Activated T-helper 1 cell treated with anti-CD3 and anti-CD28 coated beads, Interleukin-12 subunit alpha, Interleukin-12 subunit beta, Interleukin-2, Interleukin-4 antibody, amounts not matched to agents 30 ng/mL and 10 ng/mL and 1 ng/mL, durations not matched to agents 14 hours and 24 hours and 36 hours (primary cell): ENCODE measurements at regions of chr6 and their contacts with region 1.

Region 1: DNA sequence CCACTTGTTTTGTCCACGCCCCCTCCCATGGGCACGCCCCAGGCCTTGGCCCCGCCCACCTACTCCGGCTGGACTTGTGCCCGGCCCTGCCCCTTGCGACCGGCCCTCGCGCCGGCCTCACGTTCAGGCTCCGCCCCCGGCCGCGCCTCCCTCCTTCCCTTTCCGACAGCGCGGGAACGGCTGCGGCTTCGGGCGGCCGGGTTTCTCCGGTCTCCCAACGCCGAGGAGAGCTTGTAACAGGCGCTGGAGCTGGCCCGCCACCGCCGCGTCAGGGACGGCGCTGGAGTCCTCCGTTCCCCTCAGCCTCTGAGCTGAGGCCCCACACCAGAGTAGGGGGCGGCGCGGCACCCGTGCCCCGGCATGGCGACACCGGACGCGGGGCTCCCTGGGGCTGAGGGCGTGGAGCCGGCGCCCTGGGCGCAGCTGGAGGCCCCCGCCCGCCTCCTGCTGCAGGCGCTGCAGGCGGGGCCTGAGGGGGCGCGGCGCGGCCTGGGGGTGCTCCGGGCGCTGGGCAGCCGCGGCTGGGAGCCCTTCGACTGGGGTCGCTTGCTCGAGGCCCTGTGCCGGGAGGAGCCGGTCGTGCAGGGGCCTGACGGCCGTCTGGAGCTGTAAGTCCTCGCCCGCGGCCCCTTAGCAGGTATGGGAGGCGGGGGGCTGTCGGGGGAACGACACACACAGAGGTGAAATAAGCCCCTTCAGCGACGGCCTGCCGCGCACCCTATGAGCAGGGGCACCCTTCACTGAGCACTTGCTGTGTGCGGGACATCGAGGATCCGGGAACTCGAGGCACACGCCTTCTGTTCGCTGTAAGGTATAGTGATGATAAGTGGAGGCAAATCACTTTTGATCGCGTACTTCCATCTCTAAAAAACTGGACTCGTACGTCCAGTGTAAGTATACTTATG is at the start of gene FANCE:
- DNase-seq: peak; percentile 91
- H3K4me3 Mint-ChIP-seq: peak within 1 kb of the TSS; percentile 88
- H3K27ac Mint-ChIP-seq: peak within 1 kb of the TSS; percentile 61
- H3K4me1 Mint-ChIP-seq: peaks cover 48% of the 10 kb centered on the region
- H3K27me3 Mint-ChIP-seq: no peaks in the 10 kb centered on the region
- total RNA-seq, gene FANCE: 21.9 and 22.3 TPM in 2 replicates

Region 2: GRCh38 chr6:34964564-34964963 is 487.9 kb before region 1 on chr6:
- intact Hi-C with region 1: no loop called
- DNase-seq: no peak
- H3K4me3 Mint-ChIP-seq: no peak overlapping the region
- H3K27ac Mint-ChIP-seq: no peak overlapping the region
- H3K4me1 Mint-ChIP-seq: no peaks in the 10 kb centered on the region
- H3K27me3 Mint-ChIP-seq: peaks cover 3% of the 10 kb centered on the region

Region 3: DNA sequence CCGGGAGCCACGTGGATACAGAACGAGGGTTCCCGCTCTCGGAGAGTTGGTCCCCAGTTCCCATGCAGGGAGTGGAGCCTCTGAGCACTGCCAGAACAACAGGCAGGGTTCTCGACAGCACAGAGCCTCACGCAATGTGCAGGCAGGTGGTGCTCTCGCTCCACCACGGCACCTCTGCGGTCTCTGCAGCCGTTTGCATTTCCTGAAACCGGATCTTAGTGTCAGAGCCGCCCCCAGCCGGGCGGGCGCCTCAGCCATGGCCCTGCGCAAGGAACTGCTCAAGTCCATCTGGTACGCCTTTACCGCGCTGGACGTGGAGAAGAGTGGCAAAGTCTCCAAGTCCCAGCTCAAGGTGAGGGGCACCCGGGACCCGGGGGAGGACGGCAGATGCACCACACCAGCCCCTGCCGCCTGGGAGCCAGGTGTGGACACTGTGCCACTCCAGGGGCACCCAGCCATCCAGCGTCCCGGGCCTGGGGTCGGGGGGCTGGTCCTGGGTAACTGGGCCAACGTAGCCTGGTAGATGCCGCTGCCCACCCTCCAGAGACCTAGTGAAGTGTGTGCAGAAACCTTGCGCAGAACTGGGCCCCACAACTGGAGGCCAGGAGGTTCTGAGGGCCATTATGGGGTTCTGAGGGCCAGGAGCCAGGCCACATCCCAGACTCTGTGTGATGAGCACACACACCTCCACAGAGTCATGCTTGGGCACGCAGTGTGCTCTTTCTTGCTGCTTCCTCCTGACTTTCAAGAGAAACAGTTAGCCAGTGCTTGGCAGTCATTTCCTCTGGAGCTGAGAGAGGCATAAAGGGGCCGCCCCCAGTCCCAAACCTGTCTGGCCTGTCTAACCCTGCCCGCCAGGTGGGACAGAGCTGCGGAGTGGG is 154.6 kb before region 1 on chr6 and contains the start of gene DEF6:
- intact Hi-C with region 1: loop called (anchors 1 kb)
- DNase-seq: peak; percentile 85
- H3K4me3 Mint-ChIP-seq: peak within 1 kb of the TSS; percentile 88
- H3K27ac Mint-ChIP-seq: peak within 1 kb of the TSS; percentile 98
- H3K4me1 Mint-ChIP-seq: peaks cover 48% of the 10 kb centered on the region
- H3K27me3 Mint-ChIP-seq: no peaks in the 10 kb centered on the region
- total RNA-seq, gene DEF6: 123 and 125 TPM in 2 replicates

Region 4: DNA sequence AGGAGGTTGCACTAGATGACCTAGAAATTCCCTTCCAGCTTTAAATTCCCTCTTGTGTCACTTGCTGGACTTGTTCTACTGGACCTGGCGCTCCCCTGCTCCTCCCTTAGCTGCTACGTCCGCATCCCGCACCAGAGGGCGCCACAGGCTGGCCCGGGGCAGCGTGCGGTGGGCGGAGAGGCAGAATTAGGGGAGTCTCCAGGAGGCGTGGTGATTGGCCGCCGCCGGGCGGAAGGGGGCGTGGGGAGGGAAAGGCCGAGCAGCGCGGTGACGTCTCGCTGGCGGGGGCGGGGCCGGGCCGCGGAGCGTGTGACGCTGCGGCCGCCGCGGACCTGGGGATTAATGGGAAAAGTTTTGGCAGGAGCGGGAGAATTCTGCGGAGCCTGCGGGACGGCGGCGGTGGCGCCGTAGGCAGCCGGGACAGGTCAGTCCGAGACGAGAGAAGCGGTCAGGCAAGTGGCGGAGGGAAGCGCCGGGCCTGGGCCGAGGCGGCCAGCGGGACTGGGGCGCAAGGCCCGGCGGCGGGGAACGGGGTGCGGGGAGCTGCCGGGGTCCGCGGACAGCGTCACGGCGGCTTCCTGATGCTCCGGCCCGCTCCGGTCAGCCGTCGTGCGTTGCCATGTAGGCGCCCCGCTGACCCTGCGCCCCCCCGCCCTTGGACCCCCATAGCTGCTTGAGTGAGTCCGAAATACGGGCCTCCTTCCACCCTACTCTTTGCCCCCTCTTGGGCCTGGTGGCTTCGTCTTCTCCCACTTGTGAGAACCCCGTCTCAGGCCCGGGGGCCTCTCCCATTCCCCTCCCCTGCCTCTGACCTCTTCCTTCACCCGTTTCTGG is 110.0 kb before region 1 on chr6 and contains the start of gene PPARD:
- intact Hi-C with region 1: loop called (anchors 1 kb)
- DNase-seq: peak; percentile 96
- H3K4me3 Mint-ChIP-seq: peak within 1 kb of the TSS; percentile 93
- H3K27ac Mint-ChIP-seq: peak within 1 kb of the TSS; percentile 84
- H3K4me1 Mint-ChIP-seq: peaks cover 33% of the 10 kb centered on the region
- H3K27me3 Mint-ChIP-seq: no peaks in the 10 kb centered on the region
- total RNA-seq, gene PPARD: 17.4 and 18.8 TPM in 2 replicates

Region 5: DNA sequence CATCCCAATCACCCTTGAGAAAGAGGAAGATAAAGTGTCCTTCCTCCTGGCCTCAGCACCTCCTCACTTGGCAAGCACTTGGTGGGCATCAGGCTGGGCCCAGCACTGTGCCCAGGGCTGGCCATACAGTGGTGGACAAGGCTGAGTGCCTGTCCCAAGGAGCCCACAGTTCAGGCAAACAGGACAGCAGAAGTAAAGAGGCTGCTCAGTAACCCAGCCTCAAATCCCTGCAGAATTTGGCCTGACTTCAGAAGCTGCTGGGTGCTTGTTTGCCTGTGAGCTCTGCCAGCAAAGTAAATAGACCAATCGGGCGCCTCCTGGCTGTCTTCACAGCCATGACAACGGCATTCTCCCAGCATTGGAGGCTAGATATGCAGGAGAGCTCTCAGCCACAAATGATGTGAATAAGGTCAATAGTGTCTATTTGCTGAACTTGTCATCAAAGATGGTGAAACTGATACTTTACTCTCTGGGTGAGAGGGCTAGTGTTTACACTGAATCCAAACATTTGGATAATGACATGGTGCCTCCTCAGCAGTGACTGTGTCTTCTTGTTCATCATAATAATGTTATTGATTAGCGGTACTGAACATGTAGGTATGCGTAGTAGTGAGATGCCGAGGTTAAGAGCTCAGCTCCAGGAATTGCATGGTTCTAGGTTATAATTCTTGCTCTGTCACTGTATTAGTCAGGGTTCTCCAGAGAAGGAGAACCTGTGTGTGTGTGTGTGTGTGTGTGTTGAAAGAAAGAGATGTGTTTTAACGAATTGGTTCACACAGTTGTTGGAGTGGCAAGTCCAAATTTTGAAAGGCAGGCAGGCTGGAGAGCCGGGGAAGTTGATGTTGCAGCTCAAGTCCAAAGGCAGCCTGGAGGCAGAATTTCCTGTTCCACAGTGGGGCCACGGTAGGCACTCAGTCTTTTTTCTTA is 37.1 kb before region 1 on chr6:
- intact Hi-C with region 1: loop called (anchors 2 kb)
- DNase-seq: peak; percentile 22
- H3K4me3 Mint-ChIP-seq: no peak overlapping the region
- H3K27ac Mint-ChIP-seq: peak overlapping the region; percentile 3
- H3K4me1 Mint-ChIP-seq: peaks cover 66% of the 10 kb centered on the region
- H3K27me3 Mint-ChIP-seq: no peaks in the 10 kb centered on the region

Region 6: GRCh38 chr6:35496841-35497570 is 44.6 kb after region 1 on chr6 and contains the start of gene TEAD3:
- intact Hi-C with region 1: loop called (anchors 1 kb)
- DNase-seq: peak; percentile 38
- H3K4me3 Mint-ChIP-seq: peak within 1 kb of the TSS; percentile 73
- H3K27ac Mint-ChIP-seq: peak within 1 kb of the TSS; percentile 65
- H3K4me1 Mint-ChIP-seq: peaks cover 5% of the 10 kb centered on the region
- H3K27me3 Mint-ChIP-seq: peaks cover 26% of the 10 kb centered on the region
- total RNA-seq, gene TEAD3: 1.5 and 2.0 TPM in 2 replicates